ENCODE measurements at regions of chr6 and their contacts with region 1.

Region 1: GRCh38 chr6:49531774-49532569 is 18.5 kb upstream of the C6orf141 start:
- DNase-seq: no peak
- ATAC-seq: peak; percentile 62
- H3K4me3 ChIP-seq: no peak overlapping the region
- H3K27ac ChIP-seq: no peak overlapping the region
- H3K4me1 ChIP-seq: no peaks in the 10 kb centered on the region
- H3K27me3 ChIP-seq: no peaks in the 10 kb centered on the region

Region 2: DNA sequence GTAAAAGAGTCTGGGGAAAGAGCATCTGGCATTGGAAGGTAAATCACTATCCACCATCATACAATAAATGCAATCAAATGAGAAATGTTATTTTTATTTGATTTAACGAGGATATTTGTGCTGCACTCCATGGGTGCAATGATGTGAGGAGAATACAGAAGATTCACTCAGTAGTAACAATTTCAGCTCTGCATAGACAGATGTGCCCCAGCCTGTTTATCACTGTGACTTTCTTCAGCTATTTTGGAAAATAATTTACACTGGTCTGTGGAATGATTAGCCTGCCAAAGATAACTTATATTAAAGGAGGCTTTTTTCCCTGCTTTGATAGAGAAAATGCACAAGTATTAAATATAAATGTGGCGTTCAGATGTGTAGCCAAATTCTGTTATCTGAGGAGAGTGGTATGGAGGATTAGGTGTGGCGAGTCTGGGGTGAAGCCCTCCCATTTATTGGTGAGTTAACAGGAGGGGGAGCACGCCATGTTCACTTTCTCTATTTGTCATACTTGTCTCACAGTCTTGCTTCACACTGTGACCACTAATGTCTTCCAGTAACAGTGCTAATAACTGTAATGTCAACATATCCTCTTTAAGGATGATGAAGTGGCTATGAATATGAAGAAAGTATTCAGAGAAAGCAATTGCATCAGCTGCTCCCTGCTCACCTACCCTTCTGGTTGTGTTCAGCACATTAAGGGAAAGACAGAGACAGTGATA is 714.5 kb before region 1 on chr6:
- intact Hi-C with region 1: no loop called
- DNase-seq: no peak
- ATAC-seq: no peak
- H3K4me3 ChIP-seq: no peak overlapping the region
- H3K27ac ChIP-seq: no peak overlapping the region
- H3K4me1 ChIP-seq: no peaks in the 10 kb centered on the region
- H3K27me3 ChIP-seq: no peaks in the 10 kb centered on the region

Region 3: GRCh38 chr6:49468042-49468441 is 63.9 kb before region 1 on chr6:
- intact Hi-C with region 1: no loop called
- DNase-seq: no peak
- ATAC-seq: no peak
- H3K4me3 ChIP-seq: no peak overlapping the region
- H3K27ac ChIP-seq: no peak overlapping the region
- H3K4me1 ChIP-seq: no peaks in the 10 kb centered on the region
- H3K27me3 ChIP-seq: no peaks in the 10 kb centered on the region

Region 4: GRCh38 chr6:49606696-49607390 is 74.9 kb after region 1 on chr6:
- intact Hi-C with region 1: loop called in 1 of 2 experiments (anchors 5 kb)
- DNase-seq: peak in 1 of 2 donors; percentile 48
- ATAC-seq: peak; percentile 84
- H3K4me3 ChIP-seq: no peak overlapping the region
- H3K27ac ChIP-seq: no peak overlapping the region
- H3K4me1 ChIP-seq: no peaks in the 10 kb centered on the region
- H3K27me3 ChIP-seq: no peaks in the 10 kb centered on the region

Region 5: DNA sequence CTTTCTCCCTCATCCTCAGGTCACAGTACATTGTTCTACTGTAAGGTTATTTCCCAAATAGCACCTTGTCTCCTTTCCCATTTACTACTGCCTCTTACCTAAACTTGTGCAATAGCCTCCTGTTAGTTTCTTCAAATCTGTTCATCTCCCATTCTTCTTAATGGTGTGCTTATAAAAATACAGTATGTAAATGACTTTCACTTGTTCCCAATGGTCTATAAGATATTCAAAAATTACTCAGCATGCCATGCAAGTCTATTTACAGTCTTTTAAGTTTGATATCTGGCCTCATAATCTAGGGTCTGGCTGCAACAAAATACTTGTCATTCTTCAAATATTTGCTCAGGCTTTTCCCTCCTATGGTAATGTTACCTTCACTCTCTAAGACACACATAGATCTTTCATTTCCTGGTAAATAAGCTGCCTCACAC is 136.1 kb after region 1 on chr6:
- intact Hi-C with region 1: no loop called
- DNase-seq: no peak
- ATAC-seq: no peak
- H3K4me3 ChIP-seq: no peak overlapping the region
- H3K27ac ChIP-seq: no peak overlapping the region
- H3K4me1 ChIP-seq: no peaks in the 10 kb centered on the region
- H3K27me3 ChIP-seq: no peaks in the 10 kb centered on the region

Region 6: DNA sequence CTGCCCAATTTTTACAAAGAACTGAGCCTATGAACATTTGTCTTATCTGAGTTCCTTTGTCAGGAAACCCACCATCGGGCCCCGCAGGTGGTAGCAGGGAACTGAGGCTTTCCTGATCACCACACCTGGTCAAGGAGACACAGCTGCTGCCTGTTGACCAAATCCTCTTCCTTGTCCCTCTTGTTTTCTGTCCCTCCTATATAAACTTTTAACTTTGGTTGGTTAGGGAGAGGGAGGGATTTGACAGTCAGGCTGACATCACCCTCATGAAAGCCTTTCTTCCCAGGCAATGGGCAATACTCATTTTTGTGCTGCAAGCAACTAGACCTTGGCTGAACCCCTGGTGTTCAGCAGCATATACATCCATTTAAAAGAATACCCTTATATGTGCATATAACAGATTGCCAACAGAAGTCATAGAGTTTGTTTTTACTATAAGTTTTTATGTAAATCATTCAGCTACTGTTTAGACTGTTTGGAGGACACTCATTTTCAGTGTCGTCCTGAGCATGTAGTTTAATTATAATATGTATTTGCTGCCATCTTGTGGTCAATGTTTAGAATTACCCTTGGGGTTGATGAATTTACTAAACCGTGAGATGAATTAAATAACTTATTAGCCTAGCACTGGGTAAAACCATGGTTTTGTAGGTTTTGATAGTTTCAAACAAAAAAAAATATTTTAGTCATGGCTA is 317.4 kb after region 1 on chr6:
- intact Hi-C with region 1: loop called (anchors 5 kb)
- DNase-seq: no peak
- ATAC-seq: no peak
- H3K4me3 ChIP-seq: no peak overlapping the region
- H3K27ac ChIP-seq: no peak overlapping the region
- H3K4me1 ChIP-seq: no peaks in the 10 kb centered on the region
- H3K27me3 ChIP-seq: no peaks in the 10 kb centered on the region